ENCODE measurements at regions of chr7 and their contacts with region 1.

Region 1: DNA sequence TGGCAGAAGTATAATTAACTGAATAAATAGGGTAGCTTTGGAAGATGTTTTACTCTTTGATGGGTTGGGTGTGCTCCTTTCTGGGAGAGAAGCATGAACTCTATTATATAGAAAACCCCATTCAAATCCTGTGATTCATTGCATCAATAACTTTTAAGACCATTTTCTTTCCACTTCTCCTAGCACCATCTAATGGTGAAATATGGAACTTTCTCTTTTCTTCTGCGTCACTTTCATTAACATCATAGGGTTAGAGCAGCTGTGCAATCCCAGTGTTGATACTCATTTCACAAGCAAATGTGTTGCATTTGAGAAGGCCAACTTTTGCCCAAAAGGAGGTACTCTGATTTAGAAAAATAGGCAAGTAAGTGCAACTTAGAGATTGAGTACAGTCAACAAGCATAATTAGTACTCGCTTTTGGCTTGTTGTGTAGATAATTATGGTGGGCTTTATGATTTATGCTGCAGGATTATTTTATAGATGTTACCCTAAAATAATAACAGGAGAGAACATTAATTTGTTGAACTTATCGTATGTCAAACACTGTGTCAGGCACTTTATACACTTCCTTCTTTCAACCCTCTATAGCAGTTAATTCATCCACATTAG is 92.9 kb downstream of the CPED1 start:
- DNase-seq: no peak
- H3K4me3 ChIP-seq: no peak overlapping the region
- H3K27ac ChIP-seq: no peak overlapping the region
- H3K4me1 ChIP-seq: no peaks in the 10 kb centered on the region
- H3K27me3 ChIP-seq: no peaks in the 10 kb centered on the region
- CTCF ChIP-seq: peak in 3 of 4 experiments; percentile 68 to 82 (median 74)
- POLR2A ChIP-seq: no peak

Region 2: GRCh38 chr7:120987683-120988590 is 93.5 kb before region 1 on chr7:
- intact Hi-C with region 1: loop called (anchors 1 kb)
- DNase-seq: peak; percentile 85
- H3K4me3 ChIP-seq: peak overlapping the region; percentile 20 to 25
- H3K27ac ChIP-seq: peak overlapping the region; percentile 74 to 80
- H3K4me1 ChIP-seq: no peaks in the 10 kb centered on the region
- H3K27me3 ChIP-seq: no peaks in the 10 kb centered on the region
- CTCF ChIP-seq: peak; percentile 78 to 89 (median 85)
- POLR2A ChIP-seq: no peak

Region 3: DNA sequence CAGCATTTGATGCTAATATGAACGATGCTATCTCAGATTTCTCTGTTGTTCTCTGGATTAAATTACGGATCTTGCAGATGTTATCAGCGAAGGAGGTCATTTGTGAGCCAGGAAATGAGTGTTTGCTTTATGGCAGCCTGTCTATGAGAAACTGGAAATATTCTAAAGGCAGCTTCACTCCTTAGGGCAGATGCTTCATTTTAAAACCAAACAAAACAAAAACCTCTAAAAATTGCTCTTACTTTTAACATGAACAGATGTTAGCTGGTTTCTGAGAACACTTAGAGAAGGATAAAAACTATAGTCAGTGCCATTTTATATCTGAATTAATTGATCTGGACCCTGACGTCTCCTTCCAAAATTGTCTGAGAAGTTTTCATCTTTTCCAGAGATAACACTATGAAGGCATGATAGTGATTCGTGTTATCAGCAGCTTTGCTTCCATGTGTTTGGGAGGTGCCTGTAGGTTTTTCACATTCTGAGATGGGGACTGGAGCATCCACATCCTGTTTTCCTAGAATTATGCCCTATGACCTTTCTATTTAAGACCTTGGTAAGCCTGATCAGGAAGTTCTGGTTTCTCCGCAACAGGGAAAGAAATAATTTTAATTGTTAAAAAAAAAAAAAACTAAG is 39.8 kb before region 1 on chr7:
- intact Hi-C with region 1: no loop called
- DNase-seq: no peak
- H3K4me3 ChIP-seq: no peak overlapping the region
- H3K27ac ChIP-seq: peak overlapping the region in 1 of 2 donors; percentile 6
- H3K4me1 ChIP-seq: no peaks in the 10 kb centered on the region
- H3K27me3 ChIP-seq: no peaks in the 10 kb centered on the region
- CTCF ChIP-seq: no peak
- POLR2A ChIP-seq: no peak

Region 4: DNA sequence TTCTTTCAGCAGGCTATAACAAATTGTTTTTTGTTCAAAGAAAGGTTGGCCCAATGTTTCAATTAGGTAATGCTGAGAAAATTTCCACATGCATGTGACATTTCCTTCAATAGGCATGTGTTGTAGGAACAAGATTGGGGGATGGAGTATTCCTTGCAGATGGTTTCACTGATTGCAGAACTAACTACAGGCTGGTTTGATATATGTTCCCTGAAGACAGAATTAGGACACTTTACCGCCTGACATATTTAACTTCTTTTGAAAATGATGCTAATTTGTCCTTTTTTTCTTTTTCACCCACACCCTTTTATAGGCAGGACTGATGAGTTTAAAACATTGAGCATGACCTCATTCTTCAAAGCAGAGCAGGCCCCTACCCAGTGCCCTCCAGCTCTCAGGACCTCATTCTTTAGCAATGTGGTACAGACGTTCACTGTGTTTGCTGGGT is 70.4 kb after region 1 on chr7:
- intact Hi-C with region 1: no loop called
- DNase-seq: no peak
- H3K4me3 ChIP-seq: no peak overlapping the region
- H3K27ac ChIP-seq: no peak overlapping the region
- H3K4me1 ChIP-seq: no peaks in the 10 kb centered on the region
- H3K27me3 ChIP-seq: no peaks in the 10 kb centered on the region
- CTCF ChIP-seq: no peak
- POLR2A ChIP-seq: no peak

Region 5: DNA sequence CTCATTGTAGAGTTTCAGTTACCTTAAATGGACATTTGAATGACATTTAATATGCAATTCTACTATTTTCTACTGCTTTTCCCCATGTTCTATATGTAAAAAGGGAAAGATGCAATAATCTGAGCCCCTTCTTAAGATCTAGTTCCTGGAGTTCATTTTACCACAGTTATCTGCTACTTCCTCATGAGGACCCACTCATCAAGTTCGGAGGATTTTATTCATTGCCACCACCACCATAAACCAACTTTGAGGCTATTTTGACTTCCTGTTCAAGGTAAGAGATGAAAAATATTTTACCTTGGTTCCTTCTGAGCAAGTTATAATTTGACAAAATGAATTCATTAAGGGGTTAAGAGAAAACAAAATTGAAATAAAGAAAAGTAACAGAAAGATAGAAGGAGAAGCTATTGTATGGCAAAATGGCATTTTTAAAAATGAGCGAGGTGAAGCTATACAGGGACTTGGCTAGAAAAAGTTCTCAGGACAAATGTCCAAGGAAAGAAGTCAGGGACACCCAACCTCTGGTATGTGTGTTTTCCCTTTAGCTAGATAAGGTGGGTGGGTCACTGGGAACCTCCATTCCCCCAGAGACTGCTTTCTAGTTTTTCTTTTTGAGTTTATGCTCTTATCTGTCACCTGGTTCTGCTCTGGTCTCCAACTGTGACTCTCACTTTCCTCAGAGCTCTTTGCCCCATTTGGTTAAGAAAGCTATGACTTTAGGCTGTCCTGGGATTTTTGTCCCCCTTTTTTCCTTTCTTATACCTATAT is 329.6 kb after region 1 on chr7:
- intact Hi-C with region 1: no loop called
- DNase-seq: no peak
- H3K4me3 ChIP-seq: no peak overlapping the region
- H3K27ac ChIP-seq: no peak overlapping the region
- H3K4me1 ChIP-seq: no peaks in the 10 kb centered on the region
- H3K27me3 ChIP-seq: no peaks in the 10 kb centered on the region
- CTCF ChIP-seq: no peak
- POLR2A ChIP-seq: no peak

Measured in prostate gland (tissue), 2 donors.